ENCODE measurements at regions of chr1 and their contacts with region 1.

Region 1: DNA sequence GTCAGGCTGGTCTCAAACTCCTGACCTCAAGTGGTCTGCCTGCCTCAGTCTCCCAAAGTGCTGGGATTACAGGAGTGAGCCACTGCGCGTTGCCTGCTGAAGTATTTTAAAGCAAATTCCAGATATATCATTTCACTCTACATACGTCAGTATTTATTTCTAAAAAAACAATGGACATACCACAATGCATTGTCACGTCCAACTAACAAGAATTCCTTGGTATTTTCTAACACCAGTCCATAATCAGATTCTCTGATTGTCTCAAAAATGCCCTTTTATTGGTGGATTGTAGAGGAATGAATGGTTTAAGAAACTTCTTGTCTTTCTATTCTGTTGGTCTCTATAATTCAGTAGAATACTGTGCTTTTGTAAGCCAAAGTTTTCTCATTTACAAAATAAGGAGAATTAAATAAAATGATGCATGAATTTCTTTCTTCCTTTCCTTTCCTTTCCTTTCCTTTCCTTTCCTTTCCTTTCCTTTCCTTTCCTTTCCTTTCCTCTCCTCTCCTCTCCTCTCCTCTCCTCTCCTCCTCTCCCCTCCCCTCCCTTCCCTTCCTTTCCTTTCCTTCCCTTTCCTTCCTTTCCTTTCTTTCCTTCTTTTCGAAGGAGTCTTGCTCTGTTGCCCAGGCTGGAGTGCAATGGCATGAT is 55.8 kb downstream of the VPS13D start:
- DNase-seq: no peak
- H3K4me3 ChIP-seq: no peak overlapping the region
- H3K27ac ChIP-seq: no peak overlapping the region
- H3K4me1 ChIP-seq: no peaks in the 10 kb centered on the region
- H3K27me3 ChIP-seq: no peaks in the 10 kb centered on the region
- CTCF ChIP-seq: no peak

Region 2: DNA sequence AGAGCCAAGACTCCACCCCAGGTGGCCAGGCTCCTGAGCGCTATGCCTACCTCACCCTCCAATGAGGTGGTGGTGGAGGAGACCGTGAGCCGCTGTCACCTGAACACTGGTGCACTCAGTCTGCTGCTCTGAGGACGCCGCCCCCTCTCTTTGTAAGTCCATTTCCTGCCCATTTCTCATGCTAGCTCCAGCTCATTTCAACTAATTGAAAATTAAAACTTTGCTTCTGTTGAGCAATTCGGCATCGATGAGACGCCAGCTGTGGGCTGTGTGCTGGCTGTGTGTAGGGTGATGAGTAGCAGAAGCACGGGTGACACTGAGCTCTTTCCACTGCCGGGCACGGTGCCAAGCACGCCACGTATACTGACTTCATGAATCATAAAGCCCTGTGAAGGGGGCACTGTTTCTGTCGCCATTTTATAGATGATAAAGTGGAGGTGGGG is 107.6 kb before region 1 on chr1:
- intact Hi-C with region 1: no loop called
- DNase-seq: peak in 1 of 2 donors; percentile 69
- H3K4me3 ChIP-seq: no peak overlapping the region
- H3K27ac ChIP-seq: no peak overlapping the region
- H3K4me1 ChIP-seq: peaks cover 0 to 8% (median 0%) of the 10 kb centered on the region in 4 donors
- H3K27me3 ChIP-seq: peaks cover 0 to 35% of the 10 kb centered on the region in 2 donors
- CTCF ChIP-seq: no peak

Region 3: GRCh38 chr1:12229835-12230548 is 55.6 kb before region 1 on chr1 and contains the start of gene VPS13D:
- intact Hi-C with region 1: loop called (anchors 10 kb)
- DNase-seq: peak; percentile 83 to 87
- H3K4me3 ChIP-seq: peak within 1 kb of the TSS; percentile 93 to 95
- H3K27ac ChIP-seq: peak within 1 kb of the TSS; percentile 90 to 95
- H3K4me1 ChIP-seq: peaks cover 0 to 25% (median 10%) of the 10 kb centered on the region in 4 donors
- H3K27me3 ChIP-seq: no peaks in the 10 kb centered on the region
- CTCF ChIP-seq: peak; percentile 95 to 98